ENCODE measurements at regions of chr10 and their contacts with region 1.

Region 1: GRCh38 chr10:101840741-101841453 is 2.7 kb downstream of the KCNIP2 start:
- DNase-seq: peak; percentile 80
- ATAC-seq: peak; percentile 64
- H3K4me3 Mint-ChIP-seq: peak overlapping the region; percentile 88
- H3K27ac Mint-ChIP-seq: peak overlapping the region; percentile 77
- H3K4me1 Mint-ChIP-seq: peaks cover 60% of the 10 kb centered on the region
- H3K27me3 Mint-ChIP-seq: no peaks in the 10 kb centered on the region
- CTCF ChIP-seq: no peak

Region 2: GRCh38 chr10:101782811-101783735 is 57.8 kb before region 1 on chr10 and contains the start of gene NPM3:
- CTCF ChIA-PET with region 1: interaction called, 16 read pairs
- POLR2A ChIA-PET with region 1: interaction called, 3 read pairs
- intact Hi-C with region 1: loop called (anchors 2 kb)
- DNase-seq: peak; percentile 66
- ATAC-seq: peak; percentile 75
- H3K4me3 Mint-ChIP-seq: peak within 1 kb of the TSS; percentile 100
- H3K27ac Mint-ChIP-seq: peak within 1 kb of the TSS; percentile 90
- H3K4me1 Mint-ChIP-seq: peaks cover 53% of the 10 kb centered on the region
- H3K27me3 Mint-ChIP-seq: peaks cover 6% of the 10 kb centered on the region
- CTCF ChIP-seq: no peak
- total RNA-seq, gene NPM3: 48.1 and 60.7 TPM in 2 replicates

Region 3: GRCh38 chr10:101830322-101831168 is 10.4 kb before region 1 on chr10:
- CTCF ChIA-PET with region 1: interaction called, 6 read pairs
- POLR2A ChIA-PET with region 1: interaction called, 6 read pairs
- intact Hi-C with region 1: loop called (anchors 1 kb)
- DNase-seq: peak; percentile 89
- ATAC-seq: peak; percentile 75
- H3K4me3 Mint-ChIP-seq: peak overlapping the region; percentile 80
- H3K27ac Mint-ChIP-seq: peak overlapping the region; percentile 97
- H3K4me1 Mint-ChIP-seq: peaks cover 41% of the 10 kb centered on the region
- H3K27me3 Mint-ChIP-seq: no peaks in the 10 kb centered on the region
- CTCF ChIP-seq: no peak

Region 4: DNA sequence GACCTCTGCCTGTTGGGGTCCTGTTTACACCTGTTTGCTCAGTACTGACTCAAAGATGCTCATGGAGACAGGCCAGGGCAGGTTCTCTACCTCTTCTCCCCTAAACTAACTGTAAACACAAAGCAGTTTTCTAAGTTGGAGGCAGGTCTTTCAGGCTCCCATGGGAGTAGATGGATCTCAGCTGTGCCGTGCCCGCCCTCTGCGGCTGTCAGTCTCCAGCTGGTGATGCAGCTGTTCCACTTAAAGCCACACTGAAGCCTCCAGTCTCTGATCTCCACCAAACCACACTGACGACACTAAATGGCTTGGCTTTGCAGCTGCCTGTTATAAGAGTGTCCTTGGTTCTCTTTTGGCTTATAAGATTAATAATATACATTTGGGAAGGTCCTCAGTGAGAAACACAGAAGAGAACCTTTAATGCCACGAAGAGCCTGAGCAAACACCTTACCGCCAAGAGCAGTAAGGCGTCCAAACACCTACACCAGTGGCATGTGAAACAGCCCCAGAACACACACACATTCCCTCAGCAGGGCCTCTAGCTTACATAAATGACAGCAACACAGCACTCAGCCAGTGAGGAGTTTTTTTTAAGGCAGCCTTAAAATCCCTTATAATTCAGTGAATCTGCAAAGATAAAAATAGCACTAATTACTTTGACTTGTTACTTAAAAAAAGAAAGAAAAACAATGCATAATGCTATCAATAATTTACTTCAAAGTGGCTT is 63.1 kb after region 1 on chr10:
- CTCF ChIA-PET with region 1: interaction called, 12 read pairs
- POLR2A ChIA-PET with region 1: interaction called, 3 read pairs
- intact Hi-C with region 1: loop called (anchors 5 kb)
- DNase-seq: peak; percentile 53
- ATAC-seq: peak; percentile 79
- H3K4me3 Mint-ChIP-seq: peak overlapping the region; percentile 57
- H3K27ac Mint-ChIP-seq: peak overlapping the region; percentile 95
- H3K4me1 Mint-ChIP-seq: peaks cover 85% of the 10 kb centered on the region
- H3K27me3 Mint-ChIP-seq: no peaks in the 10 kb centered on the region
- CTCF ChIP-seq: no peak

Region 5: GRCh38 chr10:102020938-102021337 is 180.0 kb after region 1 on chr10:
- CTCF ChIA-PET with region 1: interaction called, 24 read pairs
- POLR2A ChIA-PET with region 1: no interaction called
- intact Hi-C with region 1: no loop called
- DNase-seq: no peak
- ATAC-seq: no peak
- H3K4me3 Mint-ChIP-seq: no peak overlapping the region
- H3K27ac Mint-ChIP-seq: no peak overlapping the region
- H3K4me1 Mint-ChIP-seq: no peaks in the 10 kb centered on the region
- H3K27me3 Mint-ChIP-seq: no peaks in the 10 kb centered on the region
- CTCF ChIP-seq: no peak

Region 6: DNA sequence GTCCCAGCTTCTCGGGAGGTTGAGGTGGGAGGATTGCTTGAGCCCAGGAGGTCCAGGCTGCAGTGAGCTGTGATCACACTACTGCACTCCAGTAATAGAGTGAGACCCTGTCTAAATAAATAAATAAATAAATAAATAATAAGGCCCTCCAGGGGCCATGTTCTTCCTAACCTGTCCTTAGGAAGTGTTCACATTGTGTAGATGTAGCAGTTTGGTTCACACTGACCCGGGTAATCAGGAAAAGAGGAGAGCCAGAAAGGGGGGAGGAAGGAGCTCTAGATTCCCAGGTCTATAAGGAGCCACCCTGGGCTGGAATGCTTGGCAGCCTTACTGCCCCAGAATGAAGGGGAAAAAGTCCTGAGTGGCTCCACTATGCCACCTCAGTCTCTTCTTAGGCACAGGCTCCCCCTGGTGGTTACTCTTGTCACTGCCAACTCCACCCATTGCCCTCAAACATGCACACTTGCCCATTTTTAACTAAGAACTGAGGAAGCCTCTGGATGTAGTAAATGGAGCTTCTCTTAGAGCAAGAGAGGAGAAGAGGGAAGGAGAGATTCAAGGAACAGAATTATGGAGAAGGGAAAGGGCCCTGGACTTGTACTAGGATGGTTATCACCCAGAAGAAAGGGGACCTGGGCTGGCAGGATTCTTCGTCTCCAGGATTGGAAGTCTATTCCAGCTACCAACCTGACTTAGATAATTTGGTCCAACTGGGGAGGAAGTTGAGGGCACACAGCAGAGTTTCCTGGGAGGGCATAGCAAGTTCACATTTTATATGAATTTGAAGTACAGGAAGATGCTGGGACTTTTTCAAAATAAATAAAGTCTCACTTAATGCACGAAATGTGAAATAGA is 232.0 kb after region 1 on chr10:
- CTCF ChIA-PET with region 1: interaction called, 182 read pairs
- POLR2A ChIA-PET with region 1: interaction called, 22 read pairs
- intact Hi-C with region 1: loop called (anchors 1 kb)
- DNase-seq: peak; percentile 65
- ATAC-seq: peak; percentile 95
- H3K4me3 Mint-ChIP-seq: no peak overlapping the region
- H3K27ac Mint-ChIP-seq: no peak overlapping the region
- H3K4me1 Mint-ChIP-seq: no peaks in the 10 kb centered on the region
- H3K27me3 Mint-ChIP-seq: no peaks in the 10 kb centered on the region
- CTCF ChIP-seq: peak; percentile 73

Region 7: DNA sequence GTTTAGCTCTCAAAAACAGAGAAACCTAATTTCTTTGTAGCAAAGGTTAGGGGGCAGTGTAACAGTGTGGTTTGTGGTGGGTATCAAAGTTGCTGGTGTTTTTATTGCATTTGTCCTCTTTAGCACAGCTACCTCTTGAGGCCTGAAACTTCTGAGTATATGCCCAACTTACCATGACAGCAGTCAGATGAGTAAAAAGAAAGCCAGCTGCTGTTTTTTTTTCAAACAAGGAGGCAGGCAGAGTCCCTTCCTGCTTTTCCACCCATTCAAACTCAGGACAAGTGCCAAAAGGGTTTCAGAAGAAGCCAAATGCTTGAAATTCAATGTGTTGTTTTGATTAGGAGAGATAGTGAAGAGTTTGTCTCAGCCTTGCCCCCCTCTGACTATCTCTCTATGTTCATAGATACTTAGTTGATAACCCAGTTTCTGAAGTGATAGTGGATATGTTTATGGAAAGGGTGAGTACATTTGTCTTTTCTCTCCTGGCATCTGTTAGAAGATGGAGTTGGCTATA is 427.5 kb after region 1 on chr10:
- CTCF ChIA-PET with region 1: no interaction called
- POLR2A ChIA-PET with region 1: no interaction called
- intact Hi-C with region 1: no loop called
- DNase-seq: no peak
- ATAC-seq: no peak
- H3K4me3 Mint-ChIP-seq: no peak overlapping the region
- H3K27ac Mint-ChIP-seq: peak overlapping the region; percentile 35
- H3K4me1 Mint-ChIP-seq: peaks cover 28% of the 10 kb centered on the region
- H3K27me3 Mint-ChIP-seq: no peaks in the 10 kb centered on the region
- CTCF ChIP-seq: no peak